ENCODE measurements at regions of chr9 and their contacts with region 1.

Region 1: GRCh38 chr9:72592502-72593403 is 71.3 kb downstream of the TMC1 start:
- DNase-seq: peak in 1 of 5 donors; percentile 24
- ATAC-seq: peak; percentile 55 to 80 (median 78)
- H3K4me3 ChIP-seq: no peak overlapping the region
- H3K27ac ChIP-seq: peak overlapping the region in 1 of 12 donors; percentile 67
- H3K4me1 ChIP-seq: peaks cover 0 to 42% (median 3%) of the 10 kb centered on the region in 12 donors
- H3K27me3 ChIP-seq: no peaks in the 10 kb centered on the region
- CTCF ChIP-seq: peak; percentile 77 to 92 (median 85)
- POLR2A ChIP-seq: no peak

Region 2: GRCh38 chr9:72280913-72281500 is 311.7 kb before region 1 on chr9:
- intact Hi-C with region 1: loop called in 2 of 10 experiments (anchors 2 to 5 kb)
- DNase-seq: peak; percentile 60 to 80 (median 66)
- ATAC-seq: peak; percentile 86 to 90 (median 88)
- H3K4me3 ChIP-seq: no peak overlapping the region
- H3K27ac ChIP-seq: no peak overlapping the region
- H3K4me1 ChIP-seq: no peaks in the 10 kb centered on the region
- H3K27me3 ChIP-seq: no peaks in the 10 kb centered on the region
- CTCF ChIP-seq: peak; percentile 85 to 98 (median 90)
- POLR2A ChIP-seq: no peak

Region 3: GRCh38 chr9:72356041-72356582 is 236.6 kb before region 1 on chr9:
- intact Hi-C with region 1: loop called in 4 of 10 experiments (anchors 5 to 10 kb)
- DNase-seq: no peak
- ATAC-seq: peak in 1 of 4 donors; percentile 13
- H3K4me3 ChIP-seq: no peak overlapping the region
- H3K27ac ChIP-seq: peak overlapping the region in 4 of 12 donors; percentile 11 to 59 (median 27)
- H3K4me1 ChIP-seq: peaks cover 11 to 80% (median 64%) of the 10 kb centered on the region in 12 donors
- H3K27me3 ChIP-seq: no peaks in the 10 kb centered on the region
- CTCF ChIP-seq: no peak
- POLR2A ChIP-seq: no peak

Region 4: DNA sequence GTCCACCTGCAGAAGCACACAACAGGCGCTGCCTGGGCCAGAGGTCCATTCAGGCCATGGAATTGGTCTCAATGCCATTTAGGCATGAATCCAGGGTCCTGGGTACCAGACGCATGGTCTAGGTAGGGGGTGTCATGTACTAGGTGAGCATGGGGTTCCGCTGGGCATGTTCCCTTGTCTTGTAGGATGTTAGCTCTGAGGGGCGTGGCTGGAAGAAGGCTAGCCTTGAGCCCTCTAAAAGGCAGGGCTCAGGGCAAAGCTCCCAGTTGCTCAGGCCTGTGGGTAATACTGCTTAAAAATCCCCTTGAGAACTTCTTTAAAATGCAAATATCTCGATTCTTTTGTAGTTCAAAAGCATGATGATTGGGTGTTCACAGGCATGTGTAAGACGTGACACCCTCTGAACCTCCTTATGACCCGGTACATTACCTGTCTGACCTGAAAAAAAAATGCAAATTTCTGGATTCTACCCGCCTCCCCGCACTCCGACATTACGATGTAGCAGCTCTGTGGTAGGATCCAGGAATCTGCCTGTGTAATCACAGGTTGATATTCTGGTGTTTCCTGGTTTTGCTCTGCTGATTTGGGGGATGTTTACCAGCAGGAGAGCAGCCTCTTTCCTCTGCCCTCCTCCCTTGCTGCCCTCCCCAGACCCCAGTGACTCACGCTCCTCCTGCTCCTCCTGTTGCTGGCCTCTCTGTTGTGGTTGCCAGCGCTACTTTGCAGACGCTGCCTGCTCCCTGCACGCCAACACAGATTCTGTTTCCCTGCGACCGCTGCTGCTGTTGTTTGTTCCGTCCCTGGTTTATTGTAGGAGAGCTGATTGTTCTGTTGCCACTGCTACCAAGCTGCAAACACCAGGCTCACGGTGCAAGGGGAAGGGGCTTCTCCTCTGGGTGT is 65.6 kb before region 1 on chr9:
- intact Hi-C with region 1: loop called in 2 of 10 experiments (anchors 5 to 10 kb)
- DNase-seq: peak; percentile 44 to 77 (median 69)
- ATAC-seq: peak; percentile 90 to 95 (median 92)
- H3K4me3 ChIP-seq: peak overlapping the region in 10 of 12 donors; percentile 4 to 44 (median 32)
- H3K27ac ChIP-seq: peak overlapping the region in 7 of 12 donors; percentile 1 to 66 (median 49)
- H3K4me1 ChIP-seq: peaks cover 0 to 27% (median 15%) of the 10 kb centered on the region in 12 donors
- H3K27me3 ChIP-seq: no peaks in the 10 kb centered on the region
- CTCF ChIP-seq: no peak
- POLR2A ChIP-seq: no peak

Region 5: GRCh38 chr9:72554221-72554641 is 38.5 kb before region 1 on chr9:
- intact Hi-C with region 1: no loop called
- DNase-seq: no peak
- ATAC-seq: no peak
- H3K4me3 ChIP-seq: no peak overlapping the region
- H3K27ac ChIP-seq: peak overlapping the region in 1 of 12 donors; percentile 4
- H3K4me1 ChIP-seq: peaks cover 0 to 8% (median 0%) of the 10 kb centered on the region in 12 donors
- H3K27me3 ChIP-seq: no peaks in the 10 kb centered on the region
- CTCF ChIP-seq: no peak
- POLR2A ChIP-seq: no peak

Region 6: GRCh38 chr9:72827950-72828731 is 235.4 kb after region 1 on chr9:
- intact Hi-C with region 1: loop called in 4 of 10 experiments (anchors 5 to 10 kb)
- DNase-seq: no peak
- ATAC-seq: no peak
- H3K4me3 ChIP-seq: no peak overlapping the region
- H3K27ac ChIP-seq: peak overlapping the region in 7 of 12 donors; percentile 19 to 82 (median 28)
- H3K4me1 ChIP-seq: peaks cover 0 to 17% (median 0%) of the 10 kb centered on the region in 12 donors
- H3K27me3 ChIP-seq: no peaks in the 10 kb centered on the region
- CTCF ChIP-seq: no peak
- POLR2A ChIP-seq: no peak